ENCODE measurements at regions of chr9 and their contacts with region 1.

Region 1: DNA sequence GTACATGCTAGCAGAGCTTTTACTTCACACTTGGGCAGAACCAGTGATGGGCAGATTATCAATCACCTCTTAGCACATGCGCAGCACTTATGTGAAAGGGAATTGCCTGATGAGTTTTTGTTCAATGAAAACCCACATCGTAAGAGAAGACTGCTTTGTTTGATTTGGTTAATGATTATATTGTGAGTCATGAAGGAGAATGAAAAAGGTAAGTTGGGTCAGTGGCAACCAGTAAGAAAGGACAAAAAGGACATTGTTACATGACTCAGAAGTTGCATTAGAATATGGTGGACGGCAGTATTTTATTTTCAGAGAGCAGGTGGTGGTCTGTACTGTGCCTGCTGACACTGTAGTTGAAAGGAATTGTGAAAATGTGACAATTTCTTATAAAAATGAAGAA is 127.4 kb downstream of the AOPEP start:
- DNase-seq: no peak
- H3K4me3 ChIP-seq: no peak overlapping the region
- CTCF ChIP-seq: no peak

Region 2: DNA sequence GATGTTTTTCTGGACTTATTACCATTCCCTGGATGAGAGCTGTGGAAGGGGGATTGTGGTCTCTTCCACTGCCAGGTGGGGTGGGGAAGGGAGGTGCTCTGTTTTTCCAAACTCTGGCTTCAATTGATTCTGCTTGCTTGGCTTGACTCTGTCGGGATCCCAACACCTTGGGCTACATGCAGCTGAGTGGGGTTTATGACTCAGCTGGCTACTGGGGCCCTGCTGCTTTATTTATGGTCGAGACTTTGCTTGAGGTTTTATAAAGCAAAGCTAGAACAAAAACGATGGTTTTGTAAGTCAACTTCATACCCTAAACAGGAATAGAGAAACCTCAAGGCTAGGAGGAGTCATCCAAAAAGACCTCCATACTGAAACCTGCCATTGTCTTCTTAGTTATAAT is 51.1 kb before region 1 on chr9:
- in situ Hi-C with region 1: loop called (anchors 5 kb)
- DNase-seq: peak; percentile 91
- H3K4me3 ChIP-seq: no peak overlapping the region
- CTCF ChIP-seq: no peak

Measured in astrocyte of the cerebellum (primary cell).